ENCODE measurements at regions of chr17 and their contacts with region 1.

Region 1: DNA sequence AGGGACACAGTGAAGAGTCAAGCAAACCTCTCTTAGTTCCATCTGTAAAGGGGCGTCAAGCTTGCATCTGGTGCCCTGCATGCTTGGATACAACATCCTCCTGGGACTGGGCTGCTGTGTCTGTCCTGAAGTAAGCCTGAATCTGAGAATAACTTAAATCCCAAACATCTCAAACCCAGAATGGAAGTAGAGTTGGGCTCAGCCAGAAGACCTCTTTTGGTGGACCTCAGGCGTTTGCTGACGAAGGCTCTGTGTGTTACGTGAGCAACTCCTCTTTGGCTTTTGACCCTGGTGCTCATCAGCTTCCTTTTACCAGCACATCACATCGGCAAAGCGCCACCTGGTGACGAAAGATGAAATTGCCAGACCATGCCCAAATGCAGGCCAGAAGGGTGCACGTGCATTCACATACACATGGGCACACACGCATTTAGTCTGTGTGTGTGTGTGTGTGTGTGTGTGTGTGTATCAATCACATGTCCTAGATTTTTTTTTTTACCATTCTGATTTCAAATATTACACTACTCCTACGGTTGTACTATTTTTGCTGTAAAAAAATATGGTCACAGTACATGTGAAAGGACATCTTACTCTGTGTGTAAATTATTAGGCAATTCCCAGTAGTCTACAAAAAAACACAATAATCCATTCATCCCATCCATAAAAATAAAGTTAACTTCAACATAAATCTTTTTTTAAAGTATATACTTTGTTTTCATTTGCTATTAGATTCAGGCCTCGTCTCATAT is 41.1 kb upstream of the FOXJ1 start:
- DNase-seq: peak; percentile 88
- ATAC-seq: peak; percentile 91 to 95

Region 2: DNA sequence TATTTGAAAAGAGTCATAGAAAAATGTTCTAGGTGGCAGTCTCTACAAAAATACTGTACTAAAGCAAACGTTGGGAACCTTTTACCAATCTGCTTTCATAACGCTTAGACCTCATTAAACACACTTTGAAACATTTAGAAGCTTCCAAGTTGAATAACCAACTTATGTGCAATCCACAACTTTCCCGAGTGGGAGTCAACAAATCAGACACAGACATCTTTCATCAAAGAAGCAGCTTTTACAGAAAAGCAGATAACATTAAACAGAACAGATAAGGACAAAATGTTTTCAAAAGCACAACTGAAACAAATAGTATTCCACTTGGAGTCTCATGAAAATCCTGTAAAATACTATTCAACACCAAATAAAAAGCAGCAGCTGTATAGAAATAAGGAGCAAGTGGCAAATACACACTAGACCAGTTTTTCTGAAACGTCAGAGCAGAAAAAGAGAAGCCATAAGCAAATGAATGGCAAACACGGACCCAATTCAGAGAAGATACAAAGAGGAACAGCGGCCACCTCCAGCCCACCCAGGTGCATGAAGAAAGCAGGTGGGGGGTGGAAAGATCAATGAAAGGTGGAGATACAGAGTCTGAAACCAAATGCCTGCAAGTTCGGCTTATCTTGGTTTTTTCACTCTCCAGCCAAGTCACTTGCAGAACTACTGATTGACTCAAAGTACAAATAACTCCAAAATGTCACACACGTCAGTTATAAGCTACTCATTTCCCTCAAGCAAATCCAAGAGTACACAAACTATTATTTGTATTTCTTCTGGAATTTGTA is 222.9 kb before region 1 on chr17:
- intact Hi-C with region 1: no loop called
- DNase-seq: no peak
- ATAC-seq: peak; percentile 37 to 50

Region 3: GRCh38 chr17:76121932-76122430 is 60.2 kb before region 1 on chr17:
- intact Hi-C with region 1: loop called in 1 of 2 experiments (anchors 5 kb)
- DNase-seq: no peak
- ATAC-seq: peak; percentile 63 to 66

Region 4: DNA sequence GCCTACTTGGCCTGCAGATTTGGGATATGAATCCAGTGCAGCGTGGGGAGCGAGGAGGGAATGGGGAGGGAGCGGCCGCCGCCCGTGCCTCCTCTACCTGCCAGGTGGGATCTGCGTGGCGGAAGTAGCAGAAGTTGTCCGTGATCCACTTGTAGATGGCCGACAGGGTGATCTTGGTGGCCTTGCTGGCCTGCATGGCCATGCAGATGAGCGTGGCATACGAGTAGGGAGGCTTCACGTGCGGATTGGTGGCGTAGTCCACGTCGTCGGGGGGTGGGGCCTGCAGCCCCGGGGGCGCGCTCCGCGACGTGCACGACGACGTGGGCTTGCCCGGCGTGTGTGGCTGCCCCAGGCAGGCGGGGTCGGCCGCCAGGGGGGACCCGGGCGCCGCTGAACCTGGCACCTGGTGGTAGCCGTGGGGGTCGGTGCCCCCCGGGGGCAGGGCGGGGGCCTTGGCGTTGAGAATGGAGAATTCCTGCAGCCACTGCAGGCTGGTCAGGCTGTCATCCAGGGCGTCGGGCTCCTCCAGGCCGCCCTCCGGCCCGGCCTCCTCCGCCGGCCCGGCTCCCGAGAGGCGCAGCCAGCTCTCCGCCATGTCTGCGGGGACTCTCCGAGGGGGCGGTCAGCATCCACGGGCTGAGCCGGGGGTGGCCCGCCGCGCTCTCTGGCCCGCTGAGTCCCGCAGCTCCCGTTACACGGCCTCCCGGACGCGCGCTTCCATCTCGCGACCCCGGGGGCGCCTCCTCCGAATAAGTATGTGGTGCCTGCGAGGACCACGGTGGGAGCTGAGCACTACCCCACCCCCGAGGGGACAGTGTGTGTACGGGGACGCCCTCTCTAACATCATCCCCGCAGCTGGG is 42.2 kb before region 1 on chr17:
- intact Hi-C with region 1: loop called in 1 of 2 experiments (anchors 10 kb)
- DNase-seq: no peak
- ATAC-seq: no peak

Region 5: GRCh38 chr17:76278952-76279741 is 97.0 kb after region 1 on chr17:
- intact Hi-C with region 1: loop called (anchors 5 to 10 kb)
- DNase-seq: peak; percentile 90
- ATAC-seq: peak; percentile 87 to 88

Measured in left cardiac atrium (tissue), 4 donors.